Activated CD4-positive, alpha-beta T cell treated with anti-CD3 and anti-CD28 coated beads for 36 hours (primary cell): ENCODE measurements at regions of chr11 and their contacts with region 1.

Region 1: DNA sequence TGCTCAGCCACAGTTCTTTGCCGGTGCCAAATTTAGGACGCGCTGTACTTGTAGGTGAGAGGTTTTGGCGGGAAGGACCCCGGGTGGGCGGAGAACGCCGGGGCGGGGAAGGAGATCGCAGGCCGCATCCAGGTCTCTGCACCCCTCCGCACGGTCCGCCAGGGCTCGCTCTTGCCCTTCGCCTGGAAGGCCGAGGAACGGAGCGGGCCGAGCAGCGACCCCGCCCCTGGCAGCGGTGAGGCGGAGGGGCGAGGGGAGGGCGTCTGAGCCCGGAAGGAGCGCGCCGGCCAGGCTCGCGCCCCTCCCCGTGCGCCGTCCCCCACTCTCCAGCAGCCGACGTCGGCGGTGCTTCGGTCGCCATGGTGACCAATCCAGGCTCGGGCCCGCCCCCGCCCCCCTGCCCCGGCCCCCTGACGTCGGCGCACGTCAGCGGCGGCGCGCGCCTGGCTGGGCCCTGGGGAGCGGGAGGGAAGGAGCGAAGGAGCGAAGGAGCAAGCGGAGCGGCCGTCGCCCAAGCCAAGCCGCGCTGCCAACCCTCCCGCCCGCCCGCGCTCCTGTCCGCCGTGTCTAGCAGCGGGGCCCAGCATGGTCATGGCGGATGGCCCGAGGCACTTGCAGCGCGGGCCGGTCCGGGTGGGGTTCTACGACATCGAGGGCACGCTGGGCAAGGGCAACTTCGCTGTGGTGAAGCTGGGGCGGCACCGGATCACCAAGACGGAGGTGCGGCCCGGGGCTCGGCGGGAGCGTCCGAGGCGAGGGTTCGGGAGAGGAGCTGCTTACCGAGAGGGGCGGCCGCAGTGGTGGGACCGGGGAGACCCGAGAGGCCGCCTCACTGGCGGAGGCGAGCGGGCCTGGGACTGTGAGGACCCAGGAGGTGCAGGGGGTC is at the start of gene SIK2:
- DNase-seq: peak; percentile 94
- ATAC-seq: peak; percentile 87
- H3K4me3 Mint-ChIP-seq: peak within 1 kb of the TSS; percentile 83
- H3K27ac Mint-ChIP-seq: peak within 1 kb of the TSS; percentile 91
- H3K4me1 Mint-ChIP-seq: peaks cover 31% of the 10 kb centered on the region
- H3K27me3 Mint-ChIP-seq: peaks cover 2% of the 10 kb centered on the region
- total RNA-seq, gene SIK2: 6.0 to 10.9 TPM

Region 2: GRCh38 chr11:111476366-111476765 is 125.9 kb before region 1 on chr11:
- CTCF ChIA-PET with region 1: no interaction called
- POLR2A ChIA-PET with region 1: no interaction called
- intact Hi-C with region 1: no loop called
- DNase-seq: no peak
- ATAC-seq: no peak
- H3K4me3 Mint-ChIP-seq: no peak overlapping the region
- H3K27ac Mint-ChIP-seq: no peak overlapping the region
- H3K4me1 Mint-ChIP-seq: no peaks in the 10 kb centered on the region
- H3K27me3 Mint-ChIP-seq: peaks cover 22% of the 10 kb centered on the region

Region 3: DNA sequence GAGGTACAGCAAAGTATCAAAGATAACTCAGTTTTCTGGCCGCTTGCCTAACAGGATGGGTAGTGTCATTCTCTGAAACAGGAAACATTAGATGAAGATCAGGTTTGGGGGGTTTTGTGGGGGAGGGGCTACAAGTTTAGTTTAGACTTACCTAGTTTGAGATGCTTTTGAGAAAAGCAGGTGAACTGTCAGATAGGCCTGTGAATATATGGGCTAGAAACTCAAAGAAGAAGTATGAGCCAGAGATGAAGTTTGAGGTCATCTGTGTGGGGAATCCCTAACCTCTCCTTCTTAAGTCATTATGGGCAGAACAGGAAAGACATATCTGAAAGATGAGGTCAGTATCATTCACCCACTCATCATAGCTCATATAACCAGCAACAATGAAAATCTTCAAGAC is 75.7 kb before region 1 on chr11:
- CTCF ChIA-PET with region 1: interaction called, 3 read pairs
- POLR2A ChIA-PET with region 1: no interaction called
- intact Hi-C with region 1: loop called in 1 of 2 experiments (anchors 2 kb)
- DNase-seq: peak; percentile 65
- ATAC-seq: peak; percentile 66
- H3K4me3 Mint-ChIP-seq: no peak overlapping the region
- H3K27ac Mint-ChIP-seq: peak overlapping the region; percentile 67
- H3K4me1 Mint-ChIP-seq: peaks cover 65% of the 10 kb centered on the region
- H3K27me3 Mint-ChIP-seq: peaks cover 3% of the 10 kb centered on the region

Region 4: GRCh38 chr11:111697933-111698371 is 95.7 kb after region 1 on chr11:
- CTCF ChIA-PET with region 1: interaction called, 14 read pairs
- POLR2A ChIA-PET with region 1: no interaction called
- intact Hi-C with region 1: no loop called
- DNase-seq: no peak
- ATAC-seq: no peak
- H3K4me3 Mint-ChIP-seq: no peak overlapping the region
- H3K27ac Mint-ChIP-seq: no peak overlapping the region
- H3K4me1 Mint-ChIP-seq: peaks cover 5% of the 10 kb centered on the region
- H3K27me3 Mint-ChIP-seq: no peaks in the 10 kb centered on the region

Region 5: DNA sequence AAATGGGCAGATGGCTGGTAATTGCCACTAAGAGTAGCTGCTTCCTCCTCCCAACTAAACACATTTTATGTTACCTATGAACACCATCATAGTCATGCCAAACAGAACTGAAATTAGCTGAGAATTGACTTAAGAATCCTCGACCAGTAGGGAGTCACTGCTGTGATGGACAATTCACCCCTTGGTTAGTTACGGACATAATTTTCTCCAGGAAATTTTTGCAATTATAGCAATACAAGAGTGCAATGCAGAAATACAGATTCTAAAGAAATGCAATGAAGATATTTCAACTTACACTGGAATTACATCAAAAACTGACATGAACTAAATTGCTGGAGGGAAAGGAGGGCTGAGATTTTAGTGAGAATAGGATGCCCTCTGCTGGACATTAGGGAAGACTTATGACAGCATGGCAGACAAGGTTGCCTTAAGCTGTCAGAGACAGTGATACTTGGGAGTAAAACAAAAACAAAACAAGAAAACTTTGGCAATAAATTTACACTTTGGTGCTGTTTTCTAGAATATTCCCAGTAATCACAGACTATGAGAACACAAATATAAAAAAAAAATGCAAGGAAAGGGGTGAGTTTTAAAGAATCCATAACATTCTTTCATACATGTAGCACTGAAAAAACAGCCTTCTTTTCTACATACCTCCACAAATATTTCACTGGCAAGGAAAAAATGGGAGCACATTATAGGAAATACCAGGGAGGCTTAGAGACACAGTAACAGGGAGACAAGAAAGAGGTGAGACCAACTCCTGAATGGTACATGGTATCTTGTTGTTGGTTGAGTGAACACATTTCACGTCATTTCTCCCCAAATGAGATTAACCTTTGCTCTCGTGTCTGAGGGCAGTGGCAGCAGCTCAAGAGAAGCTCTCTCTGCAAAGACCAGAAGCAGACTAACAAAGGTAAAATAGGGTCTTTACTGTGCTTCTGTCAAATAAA is 175.1 kb after region 1 on chr11:
- CTCF ChIA-PET with region 1: interaction called, 10 read pairs
- POLR2A ChIA-PET with region 1: no interaction called
- intact Hi-C with region 1: loop called in 1 of 2 experiments (anchors 1 kb)
- DNase-seq: peak; percentile 18
- ATAC-seq: peak; percentile 88
- H3K4me3 Mint-ChIP-seq: no peak overlapping the region
- H3K27ac Mint-ChIP-seq: no peak overlapping the region
- H3K4me1 Mint-ChIP-seq: no peaks in the 10 kb centered on the region
- H3K27me3 Mint-ChIP-seq: no peaks in the 10 kb centered on the region

Region 6: GRCh38 chr11:111878849-111879636 is 276.8 kb after region 1 on chr11 and contains the starts of genes CFAP68 and FDXACB1:
- CTCF ChIA-PET with region 1: interaction called, 3 read pairs
- POLR2A ChIA-PET with region 1: no interaction called
- intact Hi-C with region 1: loop called in 1 of 2 experiments (anchors 1 kb)
- DNase-seq: peak; percentile 97
- ATAC-seq: peak; percentile 92
- H3K4me3 Mint-ChIP-seq: peak within 1 kb of the TSS; percentile 78
- H3K27ac Mint-ChIP-seq: peak within 1 kb of the TSS; percentile 96
- H3K4me1 Mint-ChIP-seq: peaks cover 26% of the 10 kb centered on the region
- H3K27me3 Mint-ChIP-seq: no peaks in the 10 kb centered on the region
- total RNA-seq, gene CFAP68: 32.1 to 49.7 TPM
- total RNA-seq, gene FDXACB1: 5.9 to 6.0 TPM

Region 7: DNA sequence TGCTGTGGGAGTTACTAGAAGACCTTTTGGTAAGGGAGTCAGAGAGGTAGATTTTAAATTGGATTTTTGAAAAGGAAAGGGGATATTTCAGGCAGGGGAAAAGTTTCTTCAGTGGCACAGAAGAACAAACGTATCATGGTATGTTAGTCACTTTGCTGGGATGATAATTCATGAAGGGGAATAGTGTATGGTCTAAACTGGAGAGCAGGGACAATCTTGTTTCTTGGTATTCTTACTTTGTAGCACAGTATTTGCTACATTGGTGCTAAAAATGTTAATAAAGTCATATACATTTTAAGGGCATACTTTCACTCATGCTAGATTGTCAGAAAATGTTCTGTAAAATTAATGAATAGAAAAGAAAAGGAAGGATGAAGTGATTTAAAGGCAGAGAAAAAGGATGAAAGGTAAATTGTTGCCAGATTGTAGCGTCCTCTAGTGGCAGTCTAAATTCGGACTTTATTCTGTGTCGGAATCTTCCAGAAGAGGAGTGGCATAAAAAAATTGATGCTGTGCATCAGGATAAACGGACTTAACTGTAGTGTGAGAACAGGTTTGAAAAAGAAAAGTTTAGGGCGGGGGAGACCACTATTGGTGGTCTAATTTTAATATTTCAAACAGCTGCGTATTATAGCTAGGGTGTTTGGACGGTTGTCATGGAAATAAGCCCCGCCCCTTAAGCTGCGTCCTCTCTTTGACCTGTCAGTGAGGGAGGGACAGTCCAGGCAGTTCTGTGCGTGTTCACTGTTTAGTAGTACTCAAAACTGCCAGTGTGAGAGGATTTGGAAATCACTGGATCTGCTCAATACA is 572.8 kb after region 1 on chr11 and contains the start of gene BCO2:
- CTCF ChIA-PET with region 1: no interaction called
- POLR2A ChIA-PET with region 1: no interaction called
- intact Hi-C with region 1: loop called in 1 of 2 experiments (anchors 1 kb)
- DNase-seq: peak; percentile 70
- ATAC-seq: peak; percentile 81
- H3K4me3 Mint-ChIP-seq: peak within 1 kb of the TSS; percentile 54
- H3K27ac Mint-ChIP-seq: no peak within 1 kb of the TSS
- H3K4me1 Mint-ChIP-seq: peaks cover 11% of the 10 kb centered on the region
- H3K27me3 Mint-ChIP-seq: peaks cover 22% of the 10 kb centered on the region
- total RNA-seq, gene BCO2: 0.63 to 0.75 TPM

Region 8: GRCh38 chr11:113314389-113315301 is 1712.4 kb after region 1 on chr11 and contains the start of gene TTC12:
- CTCF ChIA-PET with region 1: no interaction called
- POLR2A ChIA-PET with region 1: no interaction called
- intact Hi-C with region 1: loop called in 1 of 2 experiments (anchors 10 kb)
- DNase-seq: peak; percentile 97
- ATAC-seq: peak; percentile 99
- H3K4me3 Mint-ChIP-seq: peak within 1 kb of the TSS; percentile 77
- H3K27ac Mint-ChIP-seq: peak within 1 kb of the TSS; percentile 82
- H3K4me1 Mint-ChIP-seq: peaks cover 24% of the 10 kb centered on the region
- H3K27me3 Mint-ChIP-seq: no peaks in the 10 kb centered on the region
- total RNA-seq, gene TTC12: 16.3 to 17.6 TPM